Psoas muscle (tissue), 8 donors: ENCODE measurements at regions of chr15 and their contacts with region 1.

Region 1: GRCh38 chr15:65400760-65401610 is 21.8 kb downstream of the IGDCC4 start:
- DNase-seq: peak; percentile 73 to 86
- ATAC-seq: peak; percentile 85 to 93 (median 90)
- H3K4me3 ChIP-seq: no peak overlapping the region
- H3K27ac ChIP-seq: peak overlapping the region; percentile 73
- H3K4me1 ChIP-seq: peaks cover 17% of the 10 kb centered on the region
- H3K27me3 ChIP-seq: peaks cover 0 to 2% (median under 1%) of the 10 kb centered on the region in 3 donors
- CTCF ChIP-seq: peak; percentile 60

Region 2: DNA sequence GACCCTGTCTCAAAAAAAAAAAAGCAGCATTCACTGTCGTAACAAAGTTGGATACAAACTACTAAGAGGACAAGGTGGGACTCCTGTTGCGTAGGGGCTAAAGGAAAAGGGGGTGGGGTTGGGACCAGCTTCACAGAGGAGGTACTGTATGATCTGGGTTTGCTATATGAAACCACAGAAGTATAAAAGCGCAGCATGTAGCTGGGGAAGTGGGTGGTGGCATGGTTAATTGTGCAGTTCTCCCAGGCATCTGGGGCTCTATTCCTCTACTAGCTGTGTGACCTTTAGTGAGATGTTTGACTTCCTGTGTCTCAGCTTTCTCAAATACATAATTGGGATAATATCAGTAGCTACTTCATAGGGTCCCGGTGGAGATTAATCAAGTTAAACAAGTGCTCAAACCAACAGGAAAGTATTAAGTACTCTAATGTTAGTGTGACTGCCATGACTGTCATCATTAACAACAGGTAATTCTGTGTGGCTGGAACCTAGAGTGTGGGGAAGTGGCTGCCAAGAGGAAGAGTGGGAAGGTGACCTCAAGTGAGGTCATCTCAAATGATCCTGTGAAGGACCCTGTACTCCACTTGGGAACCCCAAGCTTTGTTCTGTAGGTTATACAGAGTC is 125.8 kb before region 1 on chr15:
- intact Hi-C with region 1: no loop called
- DNase-seq: no peak
- ATAC-seq: peak in 2 of 4 donors; percentile 24 to 28
- H3K4me3 ChIP-seq: no peak overlapping the region
- H3K27ac ChIP-seq: peak overlapping the region; percentile 32
- H3K4me1 ChIP-seq: peaks cover 16% of the 10 kb centered on the region
- H3K27me3 ChIP-seq: no peaks in the 10 kb centered on the region
- CTCF ChIP-seq: no peak

Region 3: DNA sequence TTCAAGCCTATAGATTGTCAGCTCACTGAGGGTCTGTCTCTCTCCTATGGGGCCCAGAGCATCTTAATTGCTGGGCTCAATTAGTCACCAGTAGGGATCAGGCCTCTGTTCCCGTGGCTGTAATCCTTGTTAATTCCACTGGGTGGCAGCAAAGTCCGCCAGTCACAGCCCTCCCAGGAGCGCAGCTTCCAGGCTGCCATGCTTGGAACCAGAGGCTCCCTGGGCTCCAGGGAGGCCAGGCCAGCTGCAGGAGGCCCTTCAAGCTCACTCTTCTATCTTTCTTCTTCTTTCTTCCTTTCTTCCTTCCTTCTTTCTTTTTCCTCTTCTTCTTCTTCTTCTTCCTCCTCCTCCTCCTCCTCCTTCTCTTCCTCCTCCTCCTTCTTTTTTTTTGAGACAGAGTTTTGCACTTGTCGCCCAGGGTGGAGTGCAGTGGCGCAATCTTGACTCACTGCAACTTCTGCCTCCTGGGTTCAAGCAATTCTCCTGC is 82.1 kb before region 1 on chr15:
- intact Hi-C with region 1: no loop called
- DNase-seq: peak; percentile 78 to 86
- ATAC-seq: peak; percentile 92 to 99 (median 94)
- H3K4me3 ChIP-seq: no peak overlapping the region
- H3K27ac ChIP-seq: no peak overlapping the region
- H3K4me1 ChIP-seq: peaks cover 8% of the 10 kb centered on the region
- H3K27me3 ChIP-seq: no peaks in the 10 kb centered on the region
- CTCF ChIP-seq: peak; percentile 96

Region 4: GRCh38 chr15:65421360-65422070 is 20.5 kb after region 1 on chr15:
- intact Hi-C with region 1: loop called in 1 of 2 experiments (anchors 2 kb)
- DNase-seq: peak; percentile 65 to 85
- ATAC-seq: peak; percentile 66 to 83 (median 68)
- H3K4me3 ChIP-seq: peak overlapping the region; percentile 78
- H3K27ac ChIP-seq: peak overlapping the region; percentile 90
- H3K4me1 ChIP-seq: peaks cover 17% of the 10 kb centered on the region
- H3K27me3 ChIP-seq: no peaks in the 10 kb centered on the region
- CTCF ChIP-seq: no peak

Region 5: GRCh38 chr15:65434990-65435389 is 34.0 kb after region 1 on chr15:
- intact Hi-C with region 1: loop called in 1 of 2 experiments (anchors 5 kb)
- DNase-seq: no peak
- ATAC-seq: no peak
- H3K4me3 ChIP-seq: no peak overlapping the region
- H3K27ac ChIP-seq: no peak overlapping the region
- H3K4me1 ChIP-seq: no peaks in the 10 kb centered on the region
- H3K27me3 ChIP-seq: no peaks in the 10 kb centered on the region
- CTCF ChIP-seq: no peak

Region 6: DNA sequence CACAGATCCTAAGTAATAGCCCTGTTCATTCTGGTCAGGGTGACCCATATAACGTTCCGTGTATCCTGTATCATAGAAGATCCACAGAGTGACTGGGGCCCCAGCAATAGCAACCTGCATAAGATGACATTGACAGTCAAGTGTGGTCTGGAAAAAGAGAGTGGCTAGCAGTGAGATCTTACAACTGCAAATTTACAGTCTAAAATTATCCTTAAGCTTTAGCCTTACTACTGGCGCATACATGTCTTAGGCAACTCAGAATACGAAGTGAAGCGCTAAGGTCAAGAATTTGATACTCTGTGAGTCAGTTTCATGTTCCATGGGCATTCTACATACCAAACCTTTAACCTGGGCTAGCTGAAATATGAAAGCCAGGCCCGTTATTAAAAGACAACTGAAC is 51.0 kb after region 1 on chr15:
- intact Hi-C with region 1: loop called (anchors 2 to 5 kb)
- DNase-seq: no peak
- ATAC-seq: peak; percentile 89 to 96 (median 94)
- H3K4me3 ChIP-seq: no peak overlapping the region
- H3K27ac ChIP-seq: peak overlapping the region; percentile 86
- H3K4me1 ChIP-seq: peaks cover 27% of the 10 kb centered on the region
- H3K27me3 ChIP-seq: no peaks in the 10 kb centered on the region
- CTCF ChIP-seq: no peak

Region 7: DNA sequence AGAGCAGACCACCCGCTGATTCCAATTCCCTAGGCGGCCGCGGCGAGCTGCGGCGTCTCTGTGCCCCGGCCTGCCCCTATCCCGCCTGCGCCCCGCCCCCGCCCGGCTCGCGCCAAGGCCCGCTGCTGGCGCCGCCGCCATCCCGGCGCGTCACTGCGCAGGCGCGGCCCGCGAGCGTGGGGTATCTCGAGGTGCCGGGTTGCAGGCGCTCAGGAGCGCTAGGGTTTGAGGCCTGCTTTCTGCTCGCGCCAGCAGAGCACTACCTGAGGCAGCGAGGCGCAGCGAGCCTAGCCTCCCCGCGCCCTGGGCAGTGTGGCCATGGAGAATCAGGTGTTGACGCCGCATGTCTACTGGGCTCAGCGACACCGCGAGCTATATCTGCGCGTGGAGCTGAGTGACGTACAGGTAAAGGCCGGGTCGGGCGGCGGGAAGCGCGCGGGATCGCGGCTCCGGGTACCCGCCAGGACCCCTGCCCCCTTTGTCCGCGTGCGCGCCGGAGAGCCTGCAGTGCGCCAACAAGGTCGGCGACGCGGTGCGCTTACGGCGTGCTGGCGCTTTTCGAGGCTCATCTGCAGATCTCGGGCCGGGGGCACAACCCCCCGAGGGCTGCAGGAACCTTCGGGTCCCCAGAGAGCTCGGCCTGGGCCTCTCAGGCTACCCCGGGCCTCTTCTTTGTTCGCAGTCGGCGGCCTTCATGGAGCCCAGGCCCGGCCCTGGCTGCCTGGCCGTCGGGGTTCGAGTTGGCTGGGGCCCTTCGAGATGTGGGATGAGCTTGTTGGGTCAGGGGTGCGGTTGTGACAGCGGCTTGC is 129.5 kb after region 1 on chr15 and contains the start of gene HACD3:
- intact Hi-C with region 1: loop called in 1 of 2 experiments (anchors 5 kb)
- DNase-seq: peak; percentile 91 to 93
- ATAC-seq: peak; percentile 97 to 98 (median 98)
- H3K4me3 ChIP-seq: peak within 1 kb of the TSS; percentile 81
- H3K27ac ChIP-seq: peak within 1 kb of the TSS; percentile 85
- H3K4me1 ChIP-seq: peaks cover 22% of the 10 kb centered on the region
- H3K27me3 ChIP-seq: no peaks in the 10 kb centered on the region
- CTCF ChIP-seq: no peak
- total RNA-seq, gene HACD3: 5.0 to 8.7 (median 6.1) TPM

Region 8: DNA sequence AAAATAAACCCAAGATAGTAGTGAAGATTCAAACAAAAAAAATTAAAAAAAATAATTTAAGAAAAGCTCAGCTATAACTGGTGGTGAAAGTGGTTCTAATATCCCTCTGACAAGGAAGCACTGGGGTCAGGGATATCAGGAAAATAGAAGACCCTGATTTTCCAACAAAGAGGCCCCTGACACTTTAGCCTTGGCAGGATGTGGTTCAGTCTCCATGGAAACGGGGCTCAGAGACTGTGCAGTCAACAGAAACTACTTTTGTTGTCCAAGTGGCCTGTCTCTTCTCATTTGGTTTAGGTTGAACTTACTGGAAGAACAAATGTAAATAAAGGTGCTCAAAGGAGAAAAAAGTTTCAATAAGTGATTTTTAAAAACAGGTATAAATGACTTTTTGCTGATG is 182.7 kb after region 1 on chr15:
- intact Hi-C with region 1: no loop called
- DNase-seq: no peak
- ATAC-seq: no peak
- H3K4me3 ChIP-seq: no peak overlapping the region
- H3K27ac ChIP-seq: no peak overlapping the region
- H3K4me1 ChIP-seq: no peaks in the 10 kb centered on the region
- H3K27me3 ChIP-seq: no peaks in the 10 kb centered on the region
- CTCF ChIP-seq: no peak

Region 9: GRCh38 chr15:65603134-65603533 is 202.1 kb after region 1 on chr15:
- intact Hi-C with region 1: no loop called
- DNase-seq: no peak
- ATAC-seq: no peak
- H3K4me3 ChIP-seq: no peak overlapping the region
- H3K27ac ChIP-seq: no peak overlapping the region
- H3K4me1 ChIP-seq: no peaks in the 10 kb centered on the region
- H3K27me3 ChIP-seq: no peaks in the 10 kb centered on the region
- CTCF ChIP-seq: no peak